PC-9 (cell line): ENCODE measurements at regions of chr2 and their contacts with region 1.

Region 1: DNA sequence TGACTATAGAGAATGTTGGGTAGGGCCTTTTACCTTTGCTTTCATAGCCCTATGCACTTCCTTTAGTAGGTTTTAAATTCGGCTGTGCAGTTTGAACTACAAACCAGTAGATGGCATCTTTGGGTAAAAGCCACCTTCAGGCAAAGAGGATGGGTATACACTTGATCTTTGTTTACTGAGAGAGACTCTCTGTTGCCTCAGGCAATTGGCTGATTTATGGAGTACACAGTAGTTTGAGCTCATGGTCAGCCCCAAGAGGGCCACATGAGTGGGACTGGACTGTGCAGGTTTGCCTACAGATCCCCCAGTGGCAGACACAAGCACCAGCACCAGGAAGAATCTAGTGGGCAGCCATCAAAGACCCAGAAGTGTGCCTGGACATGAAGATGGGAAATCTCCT is 1304.3 kb upstream of the DDX18 start:
- DNase-seq: peak in 1 of 2 experiments; percentile 37
- H3K4me3 ChIP-seq: no peak overlapping the region
- H3K27ac ChIP-seq: no peak overlapping the region
- H3K4me1 ChIP-seq: no peaks in the 10 kb centered on the region
- H3K27me3 ChIP-seq: no peaks in the 10 kb centered on the region
- CTCF ChIP-seq: peak; percentile 61; the same call in 1 of the 2 replicates

Region 2: GRCh38 chr2:116917196-116917595 is 407.0 kb after region 1 on chr2:
- CTCF ChIA-PET with region 1: no interaction called
- POLR2A ChIA-PET with region 1: no interaction called
- intact Hi-C with region 1: no loop called
- DNase-seq: no peak
- H3K4me3 ChIP-seq: no peak overlapping the region
- H3K27ac ChIP-seq: no peak overlapping the region
- H3K4me1 ChIP-seq: no peaks in the 10 kb centered on the region
- H3K27me3 ChIP-seq: no peaks in the 10 kb centered on the region
- CTCF ChIP-seq: no peak

Region 3: GRCh38 chr2:117771969-117772630 is 1261.9 kb after region 1 on chr2:
- CTCF ChIA-PET with region 1: no interaction called
- POLR2A ChIA-PET with region 1: no interaction called
- intact Hi-C with region 1: loop called (anchors 10 kb)
- DNase-seq: no peak
- H3K4me3 ChIP-seq: no peak overlapping the region
- H3K27ac ChIP-seq: no peak overlapping the region
- H3K4me1 ChIP-seq: no peaks in the 10 kb centered on the region
- H3K27me3 ChIP-seq: peaks cover 38% of the 10 kb centered on the region
- CTCF ChIP-seq: peak; percentile 72